ENCODE measurements at regions of chr15 and their contacts with region 1.

Region 1: DNA sequence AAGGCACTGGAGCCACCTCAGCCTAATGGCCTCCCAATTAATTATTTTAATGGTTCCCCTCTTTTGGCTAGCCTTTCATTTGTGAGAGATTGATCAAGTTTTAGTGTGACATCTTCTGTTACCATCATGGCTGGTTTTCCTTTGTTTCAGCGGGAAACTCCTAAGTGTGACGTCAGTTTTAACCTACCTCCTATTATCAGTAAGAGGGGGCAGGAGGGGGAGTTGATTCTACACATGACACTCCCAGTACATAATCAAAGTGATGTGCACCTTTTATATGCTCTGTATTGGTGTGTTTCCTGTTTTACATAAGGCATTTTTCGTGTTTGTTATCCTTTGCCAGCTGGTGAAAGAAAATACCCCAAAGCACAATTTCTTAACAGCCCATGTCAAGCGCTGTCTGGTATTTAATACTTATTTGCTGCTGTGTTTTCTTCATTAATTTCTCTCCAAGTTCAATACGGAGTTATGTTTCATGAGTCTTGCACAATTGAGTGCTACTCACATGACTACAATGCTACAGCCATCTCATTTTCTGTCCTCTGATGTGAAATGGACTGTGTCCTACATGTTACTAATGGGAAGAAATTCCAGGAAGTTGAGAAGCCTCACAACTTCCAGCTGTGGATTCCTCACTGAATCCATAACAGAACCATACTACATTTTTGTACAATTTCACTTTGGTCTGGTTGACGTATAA is 52.2 kb upstream of the POLR2M start:
- DNase-seq: no peak
- ATAC-seq: peak in 1 of 8 donors; percentile 19
- H3K4me3 ChIP-seq: no peak overlapping the region
- H3K27ac ChIP-seq: peak overlapping the region in 6 of 10 donors; percentile 21 to 70 (median 52)
- H3K4me1 ChIP-seq: peaks cover 5 to 75% (median 23%) of the 10 kb centered on the region in 9 donors
- H3K27me3 ChIP-seq: no peaks in the 10 kb centered on the region
- CTCF ChIP-seq: no peak

Region 2: DNA sequence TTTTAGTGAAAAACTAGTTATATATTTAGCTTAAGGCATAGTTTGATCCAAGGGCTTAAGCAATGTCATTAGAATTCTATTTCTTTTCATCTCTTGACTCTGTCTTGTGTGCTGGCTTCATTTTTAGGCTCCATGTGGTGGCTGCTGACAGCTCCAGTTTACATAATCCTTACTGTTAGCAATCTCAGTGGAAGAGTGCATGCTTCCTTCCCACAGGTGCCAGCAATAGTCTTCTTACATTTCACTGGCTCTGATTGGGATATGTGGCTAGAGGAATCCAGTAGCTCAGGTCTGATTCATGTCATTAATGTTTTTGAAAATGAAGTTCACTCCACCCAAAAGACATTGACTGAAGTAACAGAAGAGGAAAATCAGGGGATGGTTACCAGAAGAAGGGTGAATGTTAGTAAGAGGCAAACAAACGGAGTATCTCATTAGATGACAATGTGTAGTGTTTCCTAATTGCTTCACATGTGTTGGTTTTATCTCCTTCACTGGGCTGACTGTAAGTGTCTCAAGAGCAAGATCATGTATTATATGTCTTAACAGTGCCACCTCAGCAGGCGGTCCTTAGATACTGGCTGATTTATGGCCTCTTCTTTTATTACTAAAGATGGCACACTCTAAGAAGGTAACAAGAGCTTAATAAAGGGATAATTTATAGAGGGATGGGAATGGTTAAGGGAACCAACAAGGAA is 761.5 kb before region 1 on chr15:
- intact Hi-C with region 1: loop called in 1 of 10 experiments (anchors 10 kb)
- DNase-seq: no peak
- ATAC-seq: peak in 3 of 8 donors; percentile 11 to 28 (median 25)
- H3K4me3 ChIP-seq: no peak overlapping the region
- H3K27ac ChIP-seq: peak overlapping the region in 7 of 10 donors; percentile 6 to 63 (median 58)
- H3K4me1 ChIP-seq: peaks cover 0 to 34% (median 16%) of the 10 kb centered on the region in 9 donors
- H3K27me3 ChIP-seq: no peaks in the 10 kb centered on the region
- CTCF ChIP-seq: no peak

Region 3: DNA sequence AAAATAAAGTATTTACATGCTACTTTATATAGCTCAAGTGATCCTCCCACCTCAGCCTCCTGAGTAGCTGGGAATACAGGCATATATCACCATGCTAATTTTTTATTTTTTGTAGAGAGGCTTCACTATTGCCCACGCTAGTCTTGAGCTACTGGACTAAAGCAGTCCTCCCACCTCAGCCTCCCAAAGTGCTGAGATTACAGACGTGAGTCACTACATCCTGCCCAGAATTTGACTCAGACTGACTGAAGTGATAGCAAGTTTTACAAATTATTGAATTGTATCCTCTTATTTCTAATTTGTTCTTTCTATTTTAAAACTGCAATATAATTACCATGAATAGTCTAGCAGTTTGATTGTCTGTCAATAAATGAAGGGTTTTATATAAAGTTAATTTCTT is 488.3 kb before region 1 on chr15:
- intact Hi-C with region 1: no loop called
- DNase-seq: no peak
- ATAC-seq: no peak
- H3K4me3 ChIP-seq: no peak overlapping the region
- H3K27ac ChIP-seq: no peak overlapping the region
- H3K4me1 ChIP-seq: peaks cover 0 to 15% (median 0%) of the 10 kb centered on the region in 9 donors
- H3K27me3 ChIP-seq: no peaks in the 10 kb centered on the region
- CTCF ChIP-seq: no peak

Region 4: DNA sequence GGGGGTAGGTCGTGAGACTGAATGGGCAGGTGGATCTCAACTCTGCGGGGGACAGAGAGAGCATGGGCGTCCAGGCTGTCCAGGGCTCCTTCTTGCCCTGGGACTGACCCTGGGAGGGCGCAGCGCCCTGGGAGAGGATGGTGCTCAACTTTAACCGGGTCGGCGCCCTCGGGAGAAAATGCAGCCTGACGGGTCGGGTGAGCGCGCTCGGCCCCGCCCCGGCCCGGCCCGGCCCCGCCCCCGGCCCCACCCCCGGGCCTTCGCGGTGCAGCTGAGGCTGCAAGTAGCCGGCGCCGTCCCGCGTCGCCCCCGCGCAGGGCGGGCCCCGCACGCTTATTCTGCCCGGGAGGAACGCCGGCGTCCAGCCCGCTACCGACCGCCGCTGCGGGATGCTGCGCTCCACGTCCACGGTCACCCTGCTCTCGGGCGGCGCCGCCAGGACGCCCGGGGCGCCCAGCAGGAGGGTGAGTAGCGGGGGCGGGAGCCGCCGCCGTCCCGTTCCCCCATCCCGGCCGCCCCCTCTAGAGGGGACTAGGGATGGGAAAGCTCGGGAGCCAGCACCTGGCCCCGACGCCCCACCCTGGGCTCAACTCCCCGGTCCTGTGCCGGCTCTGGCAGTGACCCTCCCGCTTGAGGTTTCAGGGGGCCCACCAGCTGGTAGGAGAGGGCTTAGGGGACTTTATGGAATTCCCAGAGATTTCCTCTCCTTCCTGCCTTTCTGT is 62.5 kb before region 1 on chr15 and contains the start of gene MYZAP:
- intact Hi-C with region 1: no loop called
- DNase-seq: peak; percentile 61 to 74
- ATAC-seq: peak; percentile 39 to 80 (median 62)
- H3K4me3 ChIP-seq: peak within 1 kb of the TSS; percentile 42 to 86 (median 78)
- H3K27ac ChIP-seq: peak within 1 kb of the TSS; percentile 75 to 95 (median 91)
- H3K4me1 ChIP-seq: peaks cover 3 to 69% (median 34%) of the 10 kb centered on the region in 9 donors
- H3K27me3 ChIP-seq: peaks cover 0 to 19% (median 0%) of the 10 kb centered on the region in 7 donors
- CTCF ChIP-seq: peak in 1 of 9 donors; percentile 26
- total RNA-seq, gene MYZAP: 505 to 1,280 (median 954) TPM

Measured in heart right ventricle (tissue), 16 donors.